PC-3 (cell line): ENCODE measurements at regions of chr17 and their contacts with region 1.

Region 1: GRCh38 chr17:5049314-5049895 is 14.2 kb upstream of the SLC52A1 start:
- DNase-seq: no peak
- ATAC-seq: no peak
- H3K4me3 ChIP-seq: no peak overlapping the region
- H3K27ac ChIP-seq: no peak overlapping the region
- H3K4me1 ChIP-seq: no peaks in the 10 kb centered on the region
- H3K27me3 ChIP-seq: no peaks in the 10 kb centered on the region
- CTCF ChIP-seq: no peak

Region 2: DNA sequence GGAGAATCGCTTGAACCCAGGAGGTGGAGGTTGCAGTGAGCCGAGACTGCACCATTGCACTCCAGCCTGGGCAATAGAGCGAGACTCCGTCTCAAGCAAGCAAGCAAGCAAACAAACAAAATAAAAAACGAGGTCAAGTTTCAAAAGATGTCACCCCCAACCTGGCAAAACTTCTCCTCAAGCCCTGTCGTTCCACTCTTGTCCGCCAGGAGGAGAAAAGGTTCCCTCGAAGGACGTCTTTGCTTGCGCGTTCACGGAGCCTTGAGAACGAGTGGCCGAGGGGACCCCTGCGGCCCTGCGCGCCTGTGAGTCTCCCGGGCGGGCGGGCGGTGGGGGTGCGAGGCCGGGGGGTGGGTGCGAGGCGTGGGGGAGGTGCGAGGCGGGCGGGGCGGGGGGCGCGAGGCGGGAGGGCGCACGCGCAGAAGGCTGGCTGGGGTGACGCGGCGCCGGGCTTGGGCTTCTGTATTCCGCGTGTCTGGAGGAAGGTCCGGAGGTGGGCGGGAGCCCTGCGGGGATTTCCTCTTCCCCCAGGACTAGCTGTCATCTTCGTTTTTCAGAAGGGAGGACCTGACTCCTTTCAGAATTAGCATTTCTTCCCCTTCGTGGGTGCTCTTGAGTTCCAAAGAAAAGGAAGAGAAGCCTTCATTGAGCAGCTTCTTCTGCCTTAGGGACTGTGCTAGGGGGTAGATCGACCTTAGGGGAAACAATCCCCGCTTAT is 17.9 kb before region 1 on chr17:
- CTCF ChIA-PET with region 1: no interaction called
- POLR2A ChIA-PET with region 1: interaction called, 22 read pairs
- intact Hi-C with region 1: no loop called
- DNase-seq: peak; percentile 78
- ATAC-seq: peak; percentile 74
- H3K4me3 ChIP-seq: peak overlapping the region; percentile 58
- H3K27ac ChIP-seq: no peak overlapping the region
- H3K4me1 ChIP-seq: 0 out of 2 replicates have a peak, but pooled peaks cover 3% of the 10 kb centered on the region
- H3K27me3 ChIP-seq: no peaks in the 10 kb centered on the region
- CTCF ChIP-seq: peak; percentile 48

Region 3: GRCh38 chr17:5097101-5097834 is 47.9 kb after region 1 on chr17:
- CTCF ChIA-PET with region 1: no interaction called
- POLR2A ChIA-PET with region 1: no interaction called
- intact Hi-C with region 1: no loop called
- DNase-seq: no peak
- ATAC-seq: no peak
- H3K4me3 ChIP-seq: no peak overlapping the region
- H3K27ac ChIP-seq: no peak overlapping the region
- H3K4me1 ChIP-seq: no peaks in the 10 kb centered on the region
- H3K27me3 ChIP-seq: no peaks in the 10 kb centered on the region
- CTCF ChIP-seq: no peak

Region 4: DNA sequence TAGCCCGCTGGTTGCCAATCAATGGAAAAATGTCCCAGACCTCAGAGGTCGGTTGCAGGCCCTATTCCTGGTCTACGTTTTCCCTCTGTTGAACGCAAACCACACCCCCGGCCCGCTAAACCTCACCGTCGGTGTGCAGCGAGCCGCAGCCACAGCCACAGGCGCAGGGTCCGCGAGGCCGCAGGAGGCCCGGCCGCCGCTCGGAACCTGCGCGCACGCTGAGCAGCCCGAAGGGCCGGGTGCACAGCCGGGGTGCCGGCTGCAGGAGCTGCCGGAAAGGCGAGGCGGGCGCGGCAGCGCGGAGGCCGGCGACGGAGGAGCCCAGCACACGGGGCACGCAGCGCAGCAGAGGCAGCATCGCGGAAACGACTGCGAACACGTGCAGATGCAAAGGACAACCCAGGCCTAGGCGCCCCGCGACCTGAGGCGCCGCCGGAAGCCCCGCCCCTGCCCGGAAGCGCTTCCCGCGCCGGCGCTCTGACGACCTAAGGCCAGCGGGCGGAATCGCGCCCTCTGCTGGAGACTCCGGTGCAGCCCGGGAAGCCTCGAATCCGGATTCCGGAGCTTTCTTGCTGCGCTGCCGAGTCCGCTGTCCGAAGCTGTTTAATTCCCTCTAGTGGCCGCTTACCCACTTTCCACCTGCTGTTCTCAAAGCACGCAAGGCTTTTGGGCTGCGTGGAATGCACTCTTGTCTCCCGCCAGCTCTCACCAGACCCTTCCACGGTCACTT is 389.5 kb after region 1 on chr17 and contains the start of gene C1QBP:
- CTCF ChIA-PET with region 1: interaction called, 10 read pairs
- POLR2A ChIA-PET with region 1: no interaction called
- intact Hi-C with region 1: no loop called
- DNase-seq: peak; percentile 94
- ATAC-seq: peak; percentile 86
- H3K4me3 ChIP-seq: peak within 1 kb of the TSS; percentile 99
- H3K27ac ChIP-seq: peak within 1 kb of the TSS; percentile 62
- H3K4me1 ChIP-seq: peaks cover 20% of the 10 kb centered on the region
- H3K27me3 ChIP-seq: no peaks in the 10 kb centered on the region
- CTCF ChIP-seq: peak; percentile 85
- total RNA-seq, gene C1QBP: 303 and 308 TPM in 2 replicates